ENCODE measurements at regions of chr5 and their contacts with region 1.

Region 1: DNA sequence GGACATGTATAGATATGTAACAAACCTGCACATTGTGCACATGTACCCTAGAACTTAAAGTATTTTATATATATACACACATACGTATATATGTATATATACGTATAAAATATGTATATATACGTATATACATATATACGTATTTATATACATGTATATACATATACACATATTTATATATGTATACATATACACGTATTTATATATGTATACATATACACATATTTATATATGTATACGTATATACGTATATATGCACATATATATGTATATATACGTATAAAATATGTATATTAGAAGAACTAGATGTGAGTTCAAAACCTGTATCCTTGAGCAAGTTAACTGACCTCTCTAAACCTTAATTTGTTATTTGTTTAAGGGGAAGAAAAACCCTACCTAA is 61.4 kb downstream of the FNIP1 start:
- DNase-seq: no peak
- ATAC-seq: no peak

Region 2: DNA sequence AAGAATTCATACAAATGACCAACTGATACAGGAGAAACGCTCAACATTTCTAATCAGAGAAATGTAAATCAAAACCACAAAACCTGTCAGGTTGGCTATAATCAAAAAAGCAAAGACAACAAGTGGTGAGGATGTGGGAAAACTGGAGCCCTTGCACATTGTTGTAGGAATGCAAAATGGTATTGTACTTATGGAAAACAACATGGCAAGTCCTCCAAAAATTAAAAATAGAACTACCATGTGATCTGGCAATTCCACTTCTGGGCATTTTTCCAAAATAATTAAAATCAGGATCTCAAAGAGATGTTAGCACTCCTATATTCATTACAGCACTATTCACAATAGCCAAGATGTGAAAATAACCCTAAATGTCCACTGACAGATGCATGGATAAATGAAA is 14.7 kb before region 1 on chr5:
- intact Hi-C with region 1: loop called (anchors 1 kb)
- DNase-seq: no peak
- ATAC-seq: no peak

Measured in Right ventricle myocardium inferior (tissue), 1 donor.